Mucosa of descending colon (tissue), 3 donors: ENCODE measurements at regions of chr2 and their contacts with region 1.

Region 1: GRCh38 chr2:173402405-173402974 is 47.8 kb downstream of the CDCA7 start:
- DNase-seq: peak; percentile 64 to 85 (median 80)
- ATAC-seq: peak; percentile 96
- H3K4me3 ChIP-seq: no peak overlapping the region
- H3K4me1 ChIP-seq: peaks cover 10% of the 10 kb centered on the region
- CTCF ChIP-seq: peak; percentile 65

Region 2: GRCh38 chr2:173462892-173463840 is 60.7 kb after region 1 on chr2:
- intact Hi-C with region 1: no loop called
- DNase-seq: peak; percentile 54 to 63 (median 58)
- ATAC-seq: peak; percentile 98
- H3K4me3 ChIP-seq: no peak overlapping the region
- H3K4me1 ChIP-seq: no peaks in the 10 kb centered on the region
- CTCF ChIP-seq: no peak

Region 3: DNA sequence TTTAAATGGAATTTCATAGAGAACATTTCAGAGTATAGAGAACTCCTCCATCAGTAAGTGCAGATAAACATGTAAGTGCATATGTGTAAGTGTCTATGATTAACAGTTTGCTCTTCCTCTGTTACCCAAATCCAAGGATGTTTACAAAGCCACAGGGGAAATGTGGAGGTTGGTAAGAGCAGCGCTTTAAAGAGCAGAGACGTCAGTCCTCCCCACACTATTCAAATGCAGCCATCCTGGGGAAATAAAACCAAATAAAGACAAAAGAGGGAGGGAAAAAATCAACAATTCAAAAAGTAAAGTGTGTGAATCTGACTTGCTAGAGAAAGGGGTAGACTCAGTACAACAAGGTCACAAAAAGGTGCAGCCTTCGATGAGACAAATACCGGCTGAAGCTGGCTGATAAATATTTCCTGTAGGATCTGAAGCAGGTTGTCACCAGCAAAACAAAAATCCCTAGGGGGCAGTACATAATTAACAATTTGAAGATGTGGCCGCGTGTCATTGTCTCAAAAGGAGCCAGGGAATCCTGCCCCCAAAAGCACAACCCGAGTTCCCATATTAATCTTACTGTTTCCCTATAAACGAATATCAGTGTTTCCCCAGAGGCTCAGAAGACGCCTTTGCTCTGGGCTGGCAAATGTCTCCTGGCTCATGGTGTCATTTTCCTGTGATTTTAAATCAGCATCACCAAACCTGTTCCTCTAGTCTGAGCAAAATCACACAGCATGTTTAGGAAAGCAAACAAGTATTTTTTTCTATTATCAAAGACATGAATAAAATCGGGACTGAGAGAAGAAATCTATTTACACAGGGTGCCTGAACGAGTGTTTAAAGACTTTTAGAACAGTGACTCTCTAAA is 168.8 kb after region 1 on chr2:
- intact Hi-C with region 1: loop called in 1 of 2 experiments (anchors 10 kb)
- DNase-seq: peak in 1 of 3 donors; percentile 34
- ATAC-seq: peak; percentile 45
- H3K4me3 ChIP-seq: no peak overlapping the region
- H3K4me1 ChIP-seq: peaks cover 3% of the 10 kb centered on the region
- CTCF ChIP-seq: peak; percentile 8

Region 4: GRCh38 chr2:174341286-174341994 is 939.0 kb after region 1 on chr2:
- intact Hi-C with region 1: loop called (anchors 10 kb)
- DNase-seq: peak; percentile 89 to 94 (median 93)
- ATAC-seq: peak; percentile 87
- H3K4me3 ChIP-seq: no peak overlapping the region
- H3K4me1 ChIP-seq: peaks cover 50% of the 10 kb centered on the region
- CTCF ChIP-seq: peak; percentile 98